ENCODE measurements at regions of chr7 and their contacts with region 1.

Region 1: DNA sequence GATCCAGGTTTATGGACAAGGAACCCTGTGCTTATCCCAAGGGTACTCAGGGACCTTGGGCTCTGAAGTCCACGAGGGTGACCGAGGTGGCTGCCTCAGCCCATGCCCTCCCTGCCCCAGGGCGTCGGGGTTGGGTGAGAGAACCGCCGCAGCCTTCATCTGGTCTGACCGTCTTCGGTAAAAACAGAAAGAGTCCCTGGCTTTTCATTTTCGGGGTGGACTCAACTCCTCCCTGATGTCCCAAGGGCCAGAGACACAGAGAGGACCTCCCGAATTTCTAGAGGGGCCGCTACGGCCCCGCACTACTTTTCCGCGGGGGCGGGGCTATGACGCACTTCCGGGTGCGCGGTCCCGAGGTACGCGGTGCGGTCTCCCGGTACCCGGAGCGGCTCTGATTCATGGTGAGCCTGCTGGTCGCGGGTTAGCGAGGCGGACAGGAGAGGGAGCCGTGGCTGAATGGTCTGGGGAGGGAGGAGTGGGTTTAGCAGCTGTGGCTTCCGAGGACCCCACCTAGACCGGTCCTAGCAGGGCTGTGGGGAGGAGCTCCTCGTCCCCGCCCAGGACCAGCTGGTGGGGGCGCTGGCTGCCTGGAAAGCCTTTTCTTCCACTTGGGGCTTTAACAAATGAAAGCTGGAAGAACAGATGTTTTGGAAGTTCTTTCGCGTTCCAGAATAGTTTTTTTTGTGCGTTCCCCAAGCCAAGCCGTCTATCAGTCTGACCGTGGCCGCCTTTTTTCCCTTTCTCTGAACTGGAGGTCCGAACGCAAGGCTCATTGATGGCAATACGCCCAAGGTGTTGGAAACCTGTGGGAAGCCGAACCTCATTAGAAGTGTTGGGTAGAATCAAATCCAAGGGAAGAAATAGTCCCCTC is at the start of gene ZSCAN21:
- DNase-seq: peak; percentile 95
- H3K4me3 Mint-ChIP-seq: peak within 1 kb of the TSS; percentile 94
- H3K27ac Mint-ChIP-seq: peak within 1 kb of the TSS; percentile 93
- H3K4me1 Mint-ChIP-seq: peaks cover 12% of the 10 kb centered on the region
- H3K27me3 Mint-ChIP-seq: peaks cover 3% of the 10 kb centered on the region
- total RNA-seq, gene ZSCAN21: 8.0 TPM in 2 replicates

Region 2: DNA sequence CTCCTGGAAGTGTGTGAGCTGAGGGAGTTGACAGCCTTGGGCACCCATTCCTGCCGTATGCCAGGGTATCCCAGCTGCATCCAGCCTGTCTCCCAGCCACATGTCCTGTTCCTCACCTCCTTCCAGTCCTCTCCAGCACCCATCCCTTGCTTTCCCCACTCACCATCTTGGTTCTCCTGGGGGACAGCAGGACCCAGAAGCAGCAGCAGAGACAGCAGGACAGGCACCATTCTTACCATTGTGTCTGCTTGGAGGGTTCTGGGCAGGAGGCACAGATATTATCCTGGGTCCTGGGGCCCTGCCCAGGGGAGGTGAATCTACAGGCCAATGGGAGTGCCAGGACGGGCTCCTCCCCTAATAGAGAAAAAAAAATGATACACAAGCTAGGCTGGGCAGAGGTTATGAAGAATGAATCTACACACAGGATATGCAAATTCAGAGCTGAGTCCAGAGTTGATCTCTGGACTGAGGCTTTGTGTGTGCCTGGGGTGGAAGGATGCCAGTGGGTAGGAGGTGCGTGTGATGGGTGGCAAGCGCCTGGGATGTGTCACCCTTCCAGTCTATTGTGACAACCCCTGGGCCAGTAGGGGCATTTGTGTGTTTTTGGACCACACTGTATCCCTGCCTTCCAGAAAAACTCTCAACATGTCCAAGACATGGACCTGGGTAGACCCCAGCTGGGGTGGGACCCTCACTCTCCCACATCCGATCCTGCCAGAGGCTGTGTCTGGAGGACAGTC is 73.7 kb before region 1 on chr7 and contains the start of gene AZGP1:
- intact Hi-C with region 1: loop called (anchors 5 kb)
- DNase-seq: no peak
- H3K4me3 Mint-ChIP-seq: no peak within 1 kb of the TSS
- H3K27ac Mint-ChIP-seq: no peak within 1 kb of the TSS
- H3K4me1 Mint-ChIP-seq: peaks cover 2% of the 10 kb centered on the region
- H3K27me3 Mint-ChIP-seq: peaks cover 10% of the 10 kb centered on the region
- total RNA-seq, gene AZGP1: not detected in 2 replicates

Region 3: DNA sequence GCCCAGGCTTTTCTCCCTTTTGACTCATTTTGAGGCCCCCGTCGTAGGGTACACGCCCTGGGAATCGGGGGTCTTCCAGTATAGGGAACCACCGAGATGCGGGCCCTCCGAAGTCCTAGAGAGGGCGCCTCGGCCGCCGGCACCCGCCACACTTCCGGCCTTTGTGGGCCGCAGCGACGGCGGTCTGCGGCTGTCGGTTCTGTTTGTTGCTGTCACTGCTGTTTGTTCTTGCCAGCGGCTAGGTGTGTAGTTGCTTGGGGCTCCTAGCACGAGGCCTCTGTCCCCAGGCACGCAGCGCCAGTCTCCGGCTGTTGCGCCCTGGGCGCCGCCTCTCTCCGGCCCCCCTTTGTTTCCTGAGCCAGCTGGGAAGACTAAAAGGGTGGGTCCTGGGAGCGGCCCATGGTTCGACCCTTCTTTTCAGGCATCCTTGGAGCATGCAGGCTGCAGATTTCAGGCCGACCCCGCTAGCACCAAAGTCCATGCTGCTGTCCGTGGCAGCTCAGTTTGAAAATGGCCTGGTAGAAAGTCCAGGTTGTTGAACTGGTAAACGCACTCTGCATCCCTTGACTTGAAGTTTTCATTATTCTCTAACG is 52.0 kb before region 1 on chr7:
- intact Hi-C with region 1: loop called (anchors 2 kb)
- DNase-seq: peak; percentile 92
- H3K4me3 Mint-ChIP-seq: peak overlapping the region; percentile 81
- H3K27ac Mint-ChIP-seq: peak overlapping the region; percentile 89
- H3K4me1 Mint-ChIP-seq: peaks cover 12% of the 10 kb centered on the region
- H3K27me3 Mint-ChIP-seq: peaks cover 2% of the 10 kb centered on the region

Region 4: GRCh38 chr7:100015232-100016209 is 34.2 kb before region 1 on chr7 and contains the start of gene ZKSCAN1:
- intact Hi-C with region 1: loop called (anchors 5 kb)
- DNase-seq: peak; percentile 96
- H3K4me3 Mint-ChIP-seq: peak within 1 kb of the TSS; percentile 95
- H3K27ac Mint-ChIP-seq: peak within 1 kb of the TSS; percentile 94
- H3K4me1 Mint-ChIP-seq: peaks cover 31% of the 10 kb centered on the region
- H3K27me3 Mint-ChIP-seq: no peaks in the 10 kb centered on the region
- total RNA-seq, gene ZKSCAN1: 54.8 and 56.3 TPM in 2 replicates